Cardiac septum (tissue), 1 donor: ENCODE measurements at regions of chr17 and their contacts with region 1.

Region 1: GRCh38 chr17:49997791-49998703 is 3.0 kb upstream of the DLX3 start:
- DNase-seq: peak; percentile 65

Region 2: GRCh38 chr17:49567871-49568694 is 430.0 kb before region 1 on chr17:
- intact Hi-C with region 1: loop called (anchors 1 kb)
- DNase-seq: peak; percentile 94

Region 3: DNA sequence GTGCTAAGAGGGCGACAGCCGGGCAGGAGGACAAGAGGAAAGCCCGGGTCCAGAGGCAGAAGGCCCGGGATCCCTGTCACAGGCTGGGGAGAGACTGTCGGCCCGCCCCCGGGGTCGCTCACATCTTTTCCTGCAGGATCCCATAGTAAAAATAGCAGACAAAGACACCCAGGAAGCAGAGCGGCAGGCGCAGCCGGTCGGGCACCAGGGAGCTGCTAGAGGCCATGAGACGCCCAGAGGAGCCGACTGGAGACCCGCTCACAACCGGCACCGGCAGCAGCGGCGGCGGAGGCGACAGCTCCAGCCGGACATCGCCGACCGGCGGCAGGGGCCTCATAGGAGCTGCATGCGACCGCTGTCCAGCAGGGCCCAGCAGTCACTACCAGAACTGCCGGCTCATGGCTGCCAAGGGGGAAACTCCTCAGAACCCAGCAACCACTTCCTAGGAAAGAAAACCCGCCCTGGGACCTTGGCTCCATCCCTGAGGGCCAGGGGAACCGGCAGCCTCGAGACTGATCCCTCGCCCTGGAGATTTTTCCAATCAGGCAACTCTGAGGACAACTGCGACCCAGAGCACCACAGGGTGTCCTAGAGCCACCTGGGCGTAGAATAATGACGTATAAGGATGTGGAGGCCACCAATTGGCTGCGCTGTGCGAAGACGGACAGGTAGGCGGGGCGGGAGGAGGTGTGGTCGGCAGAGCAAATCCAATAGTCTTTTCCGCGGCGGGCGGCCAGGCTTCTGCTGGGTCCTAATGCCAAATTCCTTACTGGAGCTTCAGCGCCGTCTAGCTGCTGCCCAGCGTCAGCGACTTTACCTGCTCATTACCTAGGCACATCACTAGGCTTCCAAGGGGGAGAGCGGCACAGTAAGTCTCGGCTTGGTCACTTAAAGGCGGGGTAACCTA is 290.2 kb before region 1 on chr17 and contains the start of gene SLC35B1:
- intact Hi-C with region 1: loop called (anchors 10 kb)
- DNase-seq: peak; percentile 100
- total RNA-seq, gene SLC35B1: 73.8 TPM

Region 4: GRCh38 chr17:49861150-49861892 is 136.7 kb before region 1 on chr17:
- intact Hi-C with region 1: loop called (anchors 1 kb)
- DNase-seq: no peak

Region 5: DNA sequence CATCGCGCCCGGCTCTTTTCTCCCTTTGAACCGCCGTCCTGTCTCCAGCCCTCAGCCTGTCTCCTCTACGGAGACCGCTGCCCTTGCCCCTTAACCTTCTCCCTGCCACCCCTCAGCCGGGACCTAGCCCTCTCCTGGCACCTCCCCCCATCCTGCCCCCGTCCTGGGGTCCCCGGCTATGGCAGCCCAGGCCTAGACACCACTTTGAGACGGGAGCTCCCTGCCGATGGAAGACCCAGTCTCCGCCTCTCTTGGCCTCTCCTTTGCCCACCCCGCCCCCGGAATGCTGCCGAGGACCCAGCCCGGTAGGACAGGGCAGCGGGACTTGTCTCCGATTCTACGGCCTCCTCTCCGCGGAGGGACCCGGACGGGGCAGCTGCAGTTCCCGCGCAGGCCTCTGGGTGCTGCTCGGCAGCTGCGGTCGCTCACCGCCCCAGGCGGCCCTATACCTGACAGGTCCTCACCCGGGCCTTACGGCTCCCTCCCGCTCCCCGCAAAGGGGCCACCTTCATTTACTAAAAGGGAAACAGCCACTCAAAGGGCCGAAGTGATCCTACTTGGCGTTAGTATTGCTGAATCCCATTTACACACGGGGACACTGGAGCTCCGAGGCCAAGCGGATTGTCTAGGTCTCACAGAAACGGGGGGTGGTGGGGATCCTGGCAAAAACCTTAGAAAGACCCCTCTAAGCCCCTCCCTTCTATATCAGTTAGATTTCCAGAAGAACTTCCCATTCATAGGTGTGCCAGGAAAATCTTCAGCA is 117.6 kb before region 1 on chr17:
- intact Hi-C with region 1: loop called (anchors 1 kb)
- DNase-seq: peak; percentile 82

Region 6: GRCh38 chr17:49952209-49952911 is 45.7 kb before region 1 on chr17:
- intact Hi-C with region 1: loop called (anchors 5 kb)
- DNase-seq: no peak